Natural killer cell (primary cell): ENCODE measurements at regions of chr1 and their contacts with region 1.

Region 1: GRCh38 chr1:209769171-209769904 is 13.5 kb downstream of the TRAF3IP3 start:
- DNase-seq: peak; percentile 51 to 83
- ATAC-seq: peak; percentile 75 to 83 (median 76)
- H3K4me3 ChIP-seq: peak overlapping the region; percentile 66
- H3K4me3 Mint-ChIP-seq: no peak overlapping the region
- H3K27ac ChIP-seq: peak overlapping the region; percentile 69
- H3K27ac Mint-ChIP-seq: no peak overlapping the region
- H3K4me1 ChIP-seq: peaks cover 53% of the 10 kb centered on the region
- H3K4me1 Mint-ChIP-seq: peaks cover 44 to 47% of the 10 kb centered on the region in 2 donors
- H3K27me3 ChIP-seq: no peaks in the 10 kb centered on the region
- H3K27me3 Mint-ChIP-seq: no peaks in the 10 kb centered on the region
- CTCF ChIP-seq: no peak

Region 2: DNA sequence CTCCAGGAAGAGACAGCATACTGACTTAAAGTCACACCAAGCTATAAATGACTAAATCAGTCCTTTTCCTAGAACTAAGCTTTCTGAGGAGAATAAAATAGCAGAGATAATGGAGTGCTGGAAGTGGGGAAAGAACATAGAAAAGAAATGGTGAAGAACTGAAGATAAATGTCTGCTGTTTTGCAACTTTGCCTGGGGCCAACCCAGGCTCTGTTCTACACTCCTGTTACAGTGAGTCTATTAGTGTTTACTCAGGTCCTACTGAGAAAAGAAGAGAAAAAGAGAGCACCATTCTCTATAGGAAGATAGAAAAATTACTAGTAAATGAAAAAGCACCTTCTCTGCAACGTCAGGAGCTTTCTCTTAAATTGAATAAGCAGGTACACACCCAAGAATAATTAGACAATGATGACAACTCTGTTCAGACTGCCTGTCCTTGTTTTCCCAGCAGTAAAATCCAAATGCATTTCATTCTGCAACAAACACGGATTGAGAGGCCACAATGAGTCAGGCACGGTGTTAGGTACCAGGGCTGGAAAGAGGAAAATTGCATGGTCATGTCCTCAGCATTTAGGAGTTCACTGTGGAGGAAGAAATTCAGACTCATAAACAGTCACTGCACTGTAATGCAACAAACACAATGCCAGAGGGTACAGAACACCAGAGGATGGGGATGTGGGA is 325.2 kb before region 1 on chr1:
- intact Hi-C with region 1: no loop called
- DNase-seq: no peak
- ATAC-seq: no peak
- H3K4me3 ChIP-seq: no peak overlapping the region
- H3K4me3 Mint-ChIP-seq: no peak overlapping the region
- H3K27ac ChIP-seq: no peak overlapping the region
- H3K27ac Mint-ChIP-seq: no peak overlapping the region
- H3K4me1 ChIP-seq: no peaks in the 10 kb centered on the region
- H3K4me1 Mint-ChIP-seq: no peaks in the 10 kb centered on the region
- H3K27me3 ChIP-seq: no peaks in the 10 kb centered on the region
- H3K27me3 Mint-ChIP-seq: peaks cover 0 to 6% of the 10 kb centered on the region in 2 donors
- CTCF ChIP-seq: no peak

Region 3: DNA sequence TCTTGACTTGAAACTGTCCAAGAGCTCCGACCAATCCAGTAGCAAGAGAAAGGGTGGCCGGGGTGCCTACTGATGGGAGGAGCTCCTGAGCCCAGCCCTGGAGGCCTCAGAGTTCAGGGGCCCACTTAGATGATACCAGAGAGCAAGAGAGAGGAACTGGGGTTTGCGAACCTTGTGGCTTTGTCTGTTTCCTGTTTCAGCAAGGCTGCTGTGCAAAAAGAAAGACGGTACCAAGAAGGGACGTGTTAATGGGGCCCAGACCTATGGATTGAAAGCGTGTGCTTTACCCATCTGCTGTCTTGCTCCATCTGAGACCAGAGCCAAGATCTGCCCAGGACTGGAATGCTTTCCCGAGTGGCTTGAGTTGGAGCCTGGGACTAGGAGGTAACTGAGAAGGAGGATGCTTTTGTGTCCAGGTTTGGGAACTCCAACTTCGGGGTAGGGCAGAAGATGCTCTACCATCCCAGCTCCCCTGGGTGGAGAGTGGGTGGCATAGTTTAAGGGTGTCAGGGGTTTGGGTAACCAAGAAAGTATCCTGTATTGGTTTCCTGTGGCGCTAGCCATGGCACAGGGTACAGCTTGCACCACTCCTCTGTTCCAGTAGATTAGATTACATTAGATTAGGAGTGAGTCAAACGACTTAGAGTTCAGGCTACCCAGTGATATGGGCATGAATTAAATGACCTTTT is 13.3 kb before region 1 on chr1 and contains the start of gene TRAF3IP3:
- intact Hi-C with region 1: loop called (anchors 1 kb)
- DNase-seq: peak; percentile 55 to 91
- ATAC-seq: peak; percentile 92 to 94 (median 94)
- H3K4me3 ChIP-seq: peak within 1 kb of the TSS; percentile 43
- H3K4me3 Mint-ChIP-seq: peak within 1 kb of the TSS; percentile 96
- H3K27ac ChIP-seq: peak within 1 kb of the TSS; percentile 81
- H3K27ac Mint-ChIP-seq: peak within 1 kb of the TSS in 1 of 2 donors; percentile 94
- H3K4me1 ChIP-seq: peaks cover 61% of the 10 kb centered on the region
- H3K4me1 Mint-ChIP-seq: peaks cover 65 to 75% of the 10 kb centered on the region in 2 donors
- H3K27me3 ChIP-seq: no peaks in the 10 kb centered on the region
- H3K27me3 Mint-ChIP-seq: no peaks in the 10 kb centered on the region
- CTCF ChIP-seq: no peak
- total RNA-seq, gene TRAF3IP3: 273 to 354 (median 287) TPM

Region 4: GRCh38 chr1:209784265-209785169 is 15.2 kb after region 1 on chr1 and contains the start of gene C1orf74:
- intact Hi-C with region 1: loop called (anchors 1 kb)
- DNase-seq: peak; percentile 100
- ATAC-seq: peak; percentile 98 to 100 (median 99)
- H3K4me3 ChIP-seq: peak within 1 kb of the TSS; percentile 66
- H3K4me3 Mint-ChIP-seq: peak within 1 kb of the TSS; percentile 95
- H3K27ac ChIP-seq: peak within 1 kb of the TSS; percentile 94
- H3K27ac Mint-ChIP-seq: peak within 1 kb of the TSS; percentile 95 to 98
- H3K4me1 ChIP-seq: peaks cover 19% of the 10 kb centered on the region
- H3K4me1 Mint-ChIP-seq: peaks cover 31 to 36% of the 10 kb centered on the region in 2 donors
- H3K27me3 ChIP-seq: no peaks in the 10 kb centered on the region
- H3K27me3 Mint-ChIP-seq: peaks cover 0 to 3% of the 10 kb centered on the region in 2 donors
- CTCF ChIP-seq: no peak
- total RNA-seq, gene C1orf74: 0.75 to 0.88 (median 0.80) TPM